ENCODE measurements at regions of chr10 and their contacts with region 1.

Region 1: GRCh38 chr10:97543025-97543575 is 29.5 kb upstream of the ANKRD2 start:
- DNase-seq: peak; percentile 67
- ATAC-seq: peak; percentile 77
- H3K4me3 ChIP-seq: 0 out of 4 replicates have a peak overlapping the region, but pooled peaks of 1 of the 2 experiments have one; percentile 6
- H3K27ac ChIP-seq: peak overlapping the region; percentile 95
- H3K4me1 ChIP-seq: peaks cover 69% of the 10 kb centered on the region
- H3K27me3 ChIP-seq: no peaks in the 10 kb centered on the region
- CTCF ChIP-seq: no peak

Region 2: GRCh38 chr10:97498076-97498840 is 44.8 kb before region 1 on chr10 and contains the start of gene MMS19:
- CTCF ChIA-PET with region 1: interaction called, 3 read pairs
- POLR2A ChIA-PET with region 1: interaction called, 3 read pairs
- in situ Hi-C with region 1: no loop called
- intact Hi-C with region 1: loop called (anchors 5 kb)
- DNase-seq: peak; percentile 81
- ATAC-seq: peak; percentile 96
- H3K4me3 ChIP-seq: peak within 1 kb of the TSS; percentile 93 to 99
- H3K27ac ChIP-seq: peak within 1 kb of the TSS; percentile 93
- H3K4me1 ChIP-seq: peaks cover 46% of the 10 kb centered on the region
- H3K27me3 ChIP-seq: no peaks in the 10 kb centered on the region
- CTCF ChIP-seq: no peak
- total RNA-seq, gene MMS19: 83.3 TPM

Measured in Panc1 (cell line).